Cardiac septum (tissue), 1 donor: ENCODE measurements at regions of chr18 and their contacts with region 1.

Region 1: GRCh38 chr18:22563098-22563707 is 145.5 kb upstream of the CTAGE1 start:
- DNase-seq: no peak

Region 2: GRCh38 chr18:21997207-21998143 is 565.7 kb before region 1 on chr18:
- intact Hi-C with region 1: loop called (anchors 2 kb)
- DNase-seq: no peak

Region 3: GRCh38 chr18:22128954-22129353 is 434.2 kb before region 1 on chr18:
- intact Hi-C with region 1: no loop called
- DNase-seq: no peak

Region 4: DNA sequence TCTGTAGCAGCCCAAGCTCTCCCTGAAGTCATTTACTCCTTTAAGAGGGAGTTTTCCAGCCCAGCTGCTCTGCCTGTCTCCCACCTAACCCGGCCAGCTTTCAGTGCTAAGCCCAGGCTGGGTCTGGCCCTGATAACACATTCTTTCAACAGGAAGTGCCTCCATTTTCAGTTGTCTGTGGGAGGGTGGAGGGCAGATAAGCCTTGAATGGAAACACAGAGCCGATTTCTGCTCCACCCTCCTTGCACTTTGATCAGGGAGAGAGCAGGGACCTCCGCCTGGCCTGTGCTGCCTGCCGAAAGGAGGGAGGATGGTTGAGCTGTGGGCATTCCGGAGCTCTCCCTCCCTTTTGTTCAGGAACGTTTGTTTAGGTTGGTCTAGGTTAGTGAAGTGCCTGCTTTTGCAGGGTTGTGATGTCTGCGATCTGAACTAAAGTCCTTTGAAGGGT is 369.0 kb before region 1 on chr18:
- intact Hi-C with region 1: loop called (anchors 5 kb)
- DNase-seq: peak; percentile 79

Region 5: GRCh38 chr18:22348521-22349316 is 214.5 kb before region 1 on chr18:
- intact Hi-C with region 1: loop called (anchors 2 kb)
- DNase-seq: peak; percentile 88

Region 6: GRCh38 chr18:22399949-22400348 is 163.3 kb before region 1 on chr18:
- intact Hi-C with region 1: loop called (anchors 5 kb)
- DNase-seq: no peak

Region 7: DNA sequence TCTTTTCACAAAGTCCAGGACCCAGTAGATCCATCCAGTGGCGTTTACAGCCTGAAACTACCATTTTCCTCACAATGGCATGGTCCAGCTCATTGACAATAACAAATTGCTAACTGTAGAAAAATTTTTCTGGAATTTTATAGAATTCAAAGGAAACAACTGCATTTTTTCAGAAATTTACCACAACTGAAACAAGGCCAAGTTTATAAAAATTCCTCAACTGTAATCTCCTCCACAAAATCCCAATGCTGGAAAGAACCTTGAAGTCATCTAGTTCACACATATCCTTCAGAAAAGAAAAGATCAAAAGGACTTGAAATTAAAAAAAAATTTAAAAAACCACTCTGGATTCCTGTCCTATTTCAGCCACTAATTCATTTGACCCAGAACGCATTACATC is 80.5 kb after region 1 on chr18:
- intact Hi-C with region 1: no loop called
- DNase-seq: no peak